GM10248 (cell line): ENCODE measurements at regions of chr1 and their contacts with region 1.

Region 1: DNA sequence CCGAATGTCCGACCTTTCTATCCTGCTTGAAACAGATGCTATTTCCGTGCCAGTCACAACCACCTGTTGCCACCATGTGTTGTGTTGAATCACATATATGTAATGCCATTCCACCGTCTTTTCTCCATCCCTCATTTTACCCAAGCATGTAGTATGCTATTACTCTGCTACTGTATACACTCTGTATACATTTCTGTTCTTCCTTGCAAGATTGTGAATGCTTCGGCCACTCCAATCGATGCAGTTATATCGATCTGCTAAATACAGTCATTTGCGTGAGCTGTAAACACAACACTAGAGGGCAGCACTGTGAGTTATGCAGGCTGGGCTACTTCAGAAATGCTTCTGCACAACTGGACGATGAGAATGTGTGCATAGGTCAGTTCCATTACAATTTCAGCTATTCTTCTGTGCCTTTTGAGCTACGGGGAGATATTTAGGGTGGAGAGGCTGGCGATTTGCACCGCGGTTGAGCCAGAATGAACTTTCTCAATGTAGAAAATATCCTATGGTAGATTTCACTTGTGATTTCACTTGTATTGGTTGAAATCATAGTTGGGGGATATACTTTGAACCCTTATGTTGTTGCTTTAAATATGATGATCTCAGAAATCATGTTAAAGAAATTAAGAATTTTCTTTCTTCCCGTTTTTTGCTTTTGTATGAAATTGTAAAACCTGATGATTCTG is 289.8 kb downstream of the NTNG1 start:
- DNase-seq: peak; percentile 25
- CTCF ChIP-seq: peak; percentile 52

Region 2: GRCh38 chr1:107299521-107299920 is 131.2 kb before region 1 on chr1:
- CTCF ChIA-PET with region 1: no interaction called
- POLR2A ChIA-PET with region 1: no interaction called
- DNase-seq: no peak
- CTCF ChIP-seq: no peak

Region 3: DNA sequence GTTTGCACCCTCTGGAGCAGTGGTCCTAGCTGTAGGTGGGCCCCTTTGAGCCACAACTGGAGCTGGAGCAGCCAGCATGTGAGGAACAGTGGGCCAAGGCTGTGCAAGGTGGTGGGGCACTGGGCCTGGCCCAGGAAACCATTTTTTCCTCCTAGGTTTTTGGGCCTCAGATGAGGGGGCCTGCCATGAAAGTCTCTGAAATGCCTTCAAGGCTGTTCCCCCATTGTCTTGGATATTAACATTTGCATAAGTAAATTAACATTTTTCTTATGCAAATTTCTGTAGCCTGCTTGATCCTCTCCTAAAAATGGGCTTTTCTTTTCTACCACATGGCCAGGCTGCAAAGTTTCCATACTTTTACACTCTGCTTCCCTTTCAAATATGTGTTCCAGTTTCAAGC is 77.8 kb before region 1 on chr1:
- CTCF ChIA-PET with region 1: no interaction called
- POLR2A ChIA-PET with region 1: no interaction called
- DNase-seq: no peak
- CTCF ChIP-seq: no peak

Region 4: GRCh38 chr1:107414560-107414959 is 16.1 kb before region 1 on chr1:
- CTCF ChIA-PET with region 1: interaction called, 28 read pairs
- POLR2A ChIA-PET with region 1: interaction called, 3 read pairs
- DNase-seq: no peak
- CTCF ChIP-seq: no peak

Region 5: DNA sequence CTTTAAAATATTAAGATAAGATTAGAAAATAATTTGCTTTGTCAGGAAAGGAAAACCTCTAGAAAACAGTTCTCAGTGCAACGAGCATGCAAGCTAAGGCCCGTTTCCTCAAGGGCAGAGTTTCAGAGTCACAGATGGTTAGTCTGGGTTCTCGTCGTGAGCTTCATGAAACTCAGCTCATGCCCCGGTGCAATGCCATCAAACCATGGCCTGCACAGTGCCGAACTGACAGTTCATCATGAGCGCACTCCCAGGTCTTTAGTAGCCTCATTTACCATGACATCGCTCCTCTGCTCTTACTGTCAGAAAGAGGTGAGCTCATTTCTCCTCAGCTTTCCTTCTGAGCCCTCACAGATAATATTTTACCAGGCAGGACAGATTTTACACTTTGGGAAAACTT is 29.4 kb after region 1 on chr1:
- CTCF ChIA-PET with region 1: interaction called, 12 read pairs
- POLR2A ChIA-PET with region 1: interaction called, 4 read pairs
- DNase-seq: no peak
- CTCF ChIP-seq: no peak

Region 6: GRCh38 chr1:107572653-107573211 is 142.0 kb after region 1 on chr1:
- CTCF ChIA-PET with region 1: no interaction called
- POLR2A ChIA-PET with region 1: no interaction called
- DNase-seq: no peak
- CTCF ChIP-seq: no peak